Mammary epithelial cell (primary cell): ENCODE measurements at regions of chrX and their contacts with region 1.

Region 1: DNA sequence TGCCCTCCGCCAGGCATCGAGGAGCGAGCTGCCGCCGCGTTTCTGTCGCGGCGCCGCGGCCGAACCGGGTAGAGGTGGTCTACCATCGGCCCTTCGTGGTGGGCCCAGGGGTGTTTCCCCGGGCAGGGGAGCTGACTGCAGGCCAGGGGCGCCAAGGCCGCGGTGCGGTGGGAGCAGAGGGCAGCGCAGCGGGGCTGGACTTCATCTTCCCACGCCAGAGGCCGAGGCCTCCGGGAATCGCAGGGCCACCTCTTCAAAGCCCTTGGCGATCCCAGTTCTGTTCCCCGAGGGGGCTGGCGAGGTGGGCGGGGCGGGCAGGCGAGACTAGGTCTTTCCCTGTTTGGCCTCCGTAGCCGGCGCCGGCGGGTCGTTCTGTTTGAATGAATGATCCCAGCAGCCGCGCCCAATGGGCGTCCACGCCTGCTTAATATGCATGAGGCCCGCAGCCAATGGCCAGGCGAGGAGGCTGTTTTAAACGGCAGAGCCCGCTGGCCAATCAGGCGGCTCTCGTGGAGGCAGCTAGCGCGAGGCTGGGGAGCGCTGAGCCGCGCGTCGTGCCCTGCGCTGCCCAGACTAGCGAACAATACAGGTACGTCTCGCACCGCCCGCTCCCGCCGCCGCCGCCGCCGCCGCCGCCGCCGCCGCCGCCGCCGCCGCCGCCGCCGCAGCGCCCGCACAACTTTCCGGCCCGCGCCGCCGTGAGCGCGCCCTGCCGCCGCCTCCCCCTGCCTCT is at the start of gene HMGB3:
- DNase-seq: peak; percentile 91
- H3K4me3 ChIP-seq: peak within 1 kb of the TSS; percentile 58 to 64 (median 63)
- H3K27ac ChIP-seq: peak within 1 kb of the TSS; percentile 35
- H3K4me1 ChIP-seq: peaks cover 6% of the 10 kb centered on the region
- H3K27me3 ChIP-seq: no peaks in the 10 kb centered on the region
- CTCF ChIP-seq: no peak
- total RNA-seq, gene HMGB3: 58.5 to 114 TPM

Region 2: DNA sequence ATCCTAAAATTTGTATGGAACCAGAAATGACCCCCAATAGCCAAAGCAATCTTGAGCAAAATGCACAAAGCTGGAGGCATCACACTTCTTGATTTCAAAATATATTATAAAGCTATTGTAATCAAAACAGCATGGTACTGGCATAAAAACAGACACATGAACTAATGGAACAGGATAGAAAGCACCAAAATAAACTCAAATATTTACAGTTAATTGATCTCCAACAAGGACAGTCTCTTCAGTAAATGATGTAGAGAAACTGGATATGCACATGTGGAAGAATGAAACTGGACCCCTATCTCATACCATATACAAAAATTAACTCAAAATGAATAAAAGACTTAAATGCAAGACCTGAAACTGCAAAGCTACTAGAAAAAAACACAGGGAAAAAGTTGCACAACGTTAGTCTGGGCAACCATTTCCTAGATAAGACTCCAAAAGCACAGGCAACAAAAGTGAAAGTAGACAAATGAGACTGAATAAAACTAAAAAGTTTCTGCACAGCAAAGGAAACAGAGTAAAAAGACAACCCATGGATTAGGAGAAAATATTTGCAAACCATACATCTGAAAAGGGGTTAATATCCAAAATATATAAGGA is 149.4 kb before region 1 on chrX:
- CTCF ChIA-PET with region 1: no interaction called
- dilution Hi-C with region 1: loop called (anchors 10 kb)
- in situ Hi-C with region 1: no loop called
- intact Hi-C with region 1: no loop called
- DNase-seq: no peak
- H3K4me3 ChIP-seq: no peak overlapping the region
- H3K27ac ChIP-seq: no peak overlapping the region
- H3K4me1 ChIP-seq: no peaks in the 10 kb centered on the region
- H3K27me3 ChIP-seq: no peaks in the 10 kb centered on the region
- CTCF ChIP-seq: no peak

Region 3: GRCh38 chrX:150845086-150845485 is 137.9 kb before region 1 on chrX:
- CTCF ChIA-PET with region 1: no interaction called
- dilution Hi-C with region 1: no loop called
- in situ Hi-C with region 1: no loop called
- intact Hi-C with region 1: loop called (anchors 2 kb)
- DNase-seq: no peak
- H3K4me3 ChIP-seq: no peak overlapping the region
- H3K27ac ChIP-seq: peak overlapping the region; percentile 72
- H3K4me1 ChIP-seq: peaks cover 54% of the 10 kb centered on the region
- H3K27me3 ChIP-seq: no peaks in the 10 kb centered on the region
- CTCF ChIP-seq: no peak

Region 4: GRCh38 chrX:150898343-150899190 is 84.4 kb before region 1 on chrX and contains the start of gene CD99L2:
- CTCF ChIA-PET with region 1: no interaction called
- dilution Hi-C with region 1: no loop called
- in situ Hi-C with region 1: no loop called
- intact Hi-C with region 1: loop called (anchors 1 kb)
- DNase-seq: peak; percentile 82
- H3K4me3 ChIP-seq: peak within 1 kb of the TSS; percentile 66 to 70 (median 70)
- H3K27ac ChIP-seq: peak within 1 kb of the TSS; percentile 72
- H3K4me1 ChIP-seq: peaks cover 7% of the 10 kb centered on the region
- H3K27me3 ChIP-seq: no peaks in the 10 kb centered on the region
- CTCF ChIP-seq: no peak
- total RNA-seq, gene CD99L2: 14.9 to 26.3 TPM

Region 5: GRCh38 chrX:150907474-150907873 is 75.5 kb before region 1 on chrX:
- CTCF ChIA-PET with region 1: no interaction called
- dilution Hi-C with region 1: loop called (anchors 5 kb)
- in situ Hi-C with region 1: no loop called
- intact Hi-C with region 1: no loop called
- DNase-seq: no peak
- H3K4me3 ChIP-seq: no peak overlapping the region
- H3K27ac ChIP-seq: no peak overlapping the region
- H3K4me1 ChIP-seq: no peaks in the 10 kb centered on the region
- H3K27me3 ChIP-seq: no peaks in the 10 kb centered on the region
- CTCF ChIP-seq: no peak